ENCODE measurements at regions of chr4 and their contacts with region 1.

Region 1: GRCh38 chr4:123477711-123478209 is 81.2 kb downstream of the SPRY1 start:
- DNase-seq: peak; percentile 74
- ATAC-seq: peak; percentile 84 to 92 (median 92)
- H3K4me3 ChIP-seq: no peak overlapping the region
- H3K4me3 Mint-ChIP-seq: peak overlapping the region; percentile 53
- H3K27ac ChIP-seq: no peak overlapping the region
- H3K27ac Mint-ChIP-seq: peak overlapping the region; percentile 75 to 79
- H3K4me1 ChIP-seq: peaks cover 16% of the 10 kb centered on the region
- H3K4me1 Mint-ChIP-seq: peaks cover 28 to 33% of the 10 kb centered on the region in 2 donors
- H3K27me3 ChIP-seq: no peaks in the 10 kb centered on the region
- H3K27me3 Mint-ChIP-seq: peaks cover 0 to 6% of the 10 kb centered on the region in 2 donors
- CTCF ChIP-seq: no peak

Region 2: DNA sequence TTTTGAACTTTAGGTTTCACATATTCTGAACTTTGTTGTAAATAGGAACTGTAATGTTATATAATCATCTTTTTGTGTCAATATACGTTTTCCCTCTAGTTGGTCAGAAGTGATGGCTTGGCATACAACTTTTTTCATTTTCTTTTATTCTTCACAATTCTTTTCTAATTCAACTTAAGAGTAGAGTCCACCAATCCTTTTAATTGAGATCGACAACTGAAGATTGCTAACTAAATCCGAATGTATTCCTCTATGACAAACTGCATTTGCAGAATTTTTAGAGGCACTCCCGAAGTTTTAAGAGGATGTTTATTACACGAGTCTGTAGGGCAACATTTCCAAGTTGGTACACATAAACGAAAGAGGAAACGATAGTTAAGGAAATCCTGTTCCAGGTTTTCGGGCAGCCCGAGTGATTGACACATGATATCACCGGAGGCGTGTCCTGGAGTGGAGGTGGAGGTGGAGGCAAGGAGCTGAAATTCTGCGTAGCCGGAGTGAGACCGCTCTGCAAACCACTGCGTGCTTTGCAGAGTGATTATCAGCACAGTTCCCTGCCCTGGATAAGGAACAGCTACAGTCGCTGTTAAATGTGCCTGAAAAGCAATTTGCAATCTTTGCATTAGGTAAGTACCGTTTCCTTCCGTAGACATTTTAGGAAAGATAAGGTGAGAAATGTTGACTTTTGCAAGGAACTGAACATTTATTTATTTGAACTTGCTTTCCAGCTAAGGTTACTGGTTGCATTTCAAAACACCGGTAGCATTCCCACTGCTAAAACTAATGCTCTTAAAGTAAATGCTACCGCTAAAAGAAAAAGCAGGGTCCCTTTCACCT is 81.2 kb before region 1 on chr4 and contains the start of gene SPRY1:
- intact Hi-C with region 1: loop called (anchors 2 kb)
- DNase-seq: peak; percentile 50 to 85
- ATAC-seq: peak; percentile 43 to 53 (median 52)
- H3K4me3 ChIP-seq: peak within 1 kb of the TSS; percentile 49
- H3K4me3 Mint-ChIP-seq: peak within 1 kb of the TSS; percentile 92
- H3K27ac ChIP-seq: peak within 1 kb of the TSS; percentile 15
- H3K27ac Mint-ChIP-seq: peak within 1 kb of the TSS; percentile 72 to 76
- H3K4me1 ChIP-seq: peaks cover 25% of the 10 kb centered on the region
- H3K4me1 Mint-ChIP-seq: peaks cover 29 to 36% of the 10 kb centered on the region in 2 donors
- H3K27me3 ChIP-seq: peaks cover 10% of the 10 kb centered on the region
- H3K27me3 Mint-ChIP-seq: peaks cover 11 to 13% of the 10 kb centered on the region in 2 donors
- CTCF ChIP-seq: no peak
- total RNA-seq, gene SPRY1: 8.7 to 9.8 (median 9.5) TPM

Region 3: GRCh38 chr4:123452616-123453015 is 25.1 kb before region 1 on chr4:
- intact Hi-C with region 1: loop called (anchors 1 kb)
- DNase-seq: peak in 1 of 2 donors; percentile 10
- ATAC-seq: no peak
- H3K4me3 ChIP-seq: no peak overlapping the region
- H3K4me3 Mint-ChIP-seq: no peak overlapping the region
- H3K27ac ChIP-seq: no peak overlapping the region
- H3K27ac Mint-ChIP-seq: no peak overlapping the region
- H3K4me1 ChIP-seq: peaks cover 4% of the 10 kb centered on the region
- H3K4me1 Mint-ChIP-seq: peaks cover 13% of the 10 kb centered on the region in 2 donors
- H3K27me3 ChIP-seq: no peaks in the 10 kb centered on the region
- H3K27me3 Mint-ChIP-seq: peaks cover 0 to 4% of the 10 kb centered on the region in 2 donors
- CTCF ChIP-seq: no peak

Region 4: DNA sequence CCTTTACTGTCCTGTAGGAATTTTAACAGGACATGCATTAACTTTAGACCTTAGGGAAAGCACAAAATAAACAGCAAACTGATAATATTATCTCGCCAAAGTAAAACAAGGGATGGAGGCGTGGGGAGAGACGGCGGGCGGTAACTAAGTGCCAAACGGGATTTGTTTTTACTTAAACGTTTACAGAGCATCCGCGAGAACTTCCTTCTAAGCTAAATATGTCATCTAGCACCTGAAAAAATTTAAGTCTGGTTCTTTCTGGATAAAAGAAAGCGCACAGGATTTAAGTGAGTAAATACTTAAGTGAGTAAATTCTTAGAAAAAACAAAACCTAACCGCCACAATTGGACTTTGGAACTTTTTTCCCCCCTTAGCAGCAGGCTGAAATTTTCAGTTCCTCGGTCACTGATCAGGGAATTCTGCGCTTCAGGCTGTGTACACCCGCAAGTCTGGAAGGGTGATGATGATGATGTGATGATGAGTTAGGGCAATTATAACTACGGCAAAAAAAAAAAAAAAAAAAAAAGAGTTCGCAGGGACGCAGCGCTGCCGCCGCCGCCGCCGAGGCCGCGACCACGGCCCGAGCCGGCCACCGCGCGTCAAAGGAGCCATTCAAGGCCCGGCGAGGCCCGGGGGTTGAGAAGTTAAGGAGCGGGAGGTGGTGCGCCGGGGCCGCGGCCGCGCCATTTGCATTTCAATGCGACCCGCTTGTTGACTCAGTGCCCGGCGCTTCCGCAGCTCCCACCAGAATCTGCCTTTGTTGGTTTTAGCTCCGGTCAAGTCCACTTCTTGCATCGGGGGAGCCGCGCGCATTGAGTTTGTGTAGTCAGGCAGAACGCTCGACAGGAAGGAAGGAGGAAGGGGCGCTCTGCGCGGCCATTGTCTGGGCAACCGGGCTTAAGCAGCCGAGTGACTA is 27.6 kb after region 1 on chr4:
- intact Hi-C with region 1: loop called (anchors 2 kb)
- DNase-seq: peak; percentile 8 to 22
- ATAC-seq: peak; percentile 48 to 76 (median 75)
- H3K4me3 ChIP-seq: peak overlapping the region; percentile 36
- H3K4me3 Mint-ChIP-seq: peak overlapping the region; percentile 94
- H3K27ac ChIP-seq: no peak overlapping the region
- H3K27ac Mint-ChIP-seq: peak overlapping the region; percentile 58 to 87
- H3K4me1 ChIP-seq: peaks cover 11% of the 10 kb centered on the region
- H3K4me1 Mint-ChIP-seq: peaks cover 11 to 12% of the 10 kb centered on the region in 2 donors
- H3K27me3 ChIP-seq: no peaks in the 10 kb centered on the region
- H3K27me3 Mint-ChIP-seq: peaks cover 14 to 17% of the 10 kb centered on the region in 2 donors
- CTCF ChIP-seq: no peak

Region 5: GRCh38 chr4:123599920-123600810 is 122.4 kb after region 1 on chr4:
- intact Hi-C with region 1: loop called (anchors 5 kb)
- DNase-seq: peak; percentile 46 to 81
- ATAC-seq: peak; percentile 95 to 99 (median 97)
- H3K4me3 ChIP-seq: no peak overlapping the region
- H3K4me3 Mint-ChIP-seq: peak overlapping the region; percentile 38
- H3K27ac ChIP-seq: peak overlapping the region; percentile 57
- H3K27ac Mint-ChIP-seq: peak overlapping the region; percentile 76 to 91
- H3K4me1 ChIP-seq: peaks cover 11% of the 10 kb centered on the region
- H3K4me1 Mint-ChIP-seq: peaks cover 33 to 34% of the 10 kb centered on the region in 2 donors
- H3K27me3 ChIP-seq: no peaks in the 10 kb centered on the region
- H3K27me3 Mint-ChIP-seq: peaks cover 0 to 2% of the 10 kb centered on the region in 2 donors
- CTCF ChIP-seq: no peak

Region 6: GRCh38 chr4:123806056-123806455 is 328.3 kb after region 1 on chr4:
- intact Hi-C with region 1: no loop called
- DNase-seq: no peak
- ATAC-seq: no peak
- H3K4me3 ChIP-seq: no peak overlapping the region
- H3K4me3 Mint-ChIP-seq: no peak overlapping the region
- H3K27ac ChIP-seq: no peak overlapping the region
- H3K27ac Mint-ChIP-seq: no peak overlapping the region
- H3K4me1 ChIP-seq: no peaks in the 10 kb centered on the region
- H3K4me1 Mint-ChIP-seq: no peaks in the 10 kb centered on the region
- H3K27me3 ChIP-seq: no peaks in the 10 kb centered on the region
- H3K27me3 Mint-ChIP-seq: peaks cover 0 to 6% of the 10 kb centered on the region in 2 donors
- CTCF ChIP-seq: no peak

Region 7: DNA sequence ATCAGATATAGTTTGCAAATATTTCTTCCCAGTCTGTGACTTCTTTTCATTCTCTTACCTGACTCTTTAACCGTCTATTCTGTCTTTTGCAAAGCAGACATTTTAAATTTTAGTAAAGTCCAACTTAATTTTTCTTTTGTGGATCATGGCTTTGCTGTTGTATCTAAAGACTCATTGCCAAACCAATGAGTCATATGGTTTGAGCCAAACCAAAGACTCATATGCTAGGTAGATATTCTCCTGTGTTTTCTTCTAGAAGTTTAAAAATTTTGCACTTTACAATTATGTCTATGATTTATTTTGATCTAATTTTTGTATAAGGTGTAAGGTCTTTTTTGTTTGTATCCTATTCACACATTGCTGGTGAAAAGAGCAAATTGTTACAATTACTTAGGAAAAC is 787.9 kb after region 1 on chr4:
- intact Hi-C with region 1: no loop called
- DNase-seq: no peak
- ATAC-seq: no peak
- H3K4me3 ChIP-seq: no peak overlapping the region
- H3K4me3 Mint-ChIP-seq: no peak overlapping the region
- H3K27ac ChIP-seq: no peak overlapping the region
- H3K27ac Mint-ChIP-seq: no peak overlapping the region
- H3K4me1 ChIP-seq: no peaks in the 10 kb centered on the region
- H3K4me1 Mint-ChIP-seq: no peaks in the 10 kb centered on the region
- H3K27me3 ChIP-seq: no peaks in the 10 kb centered on the region
- H3K27me3 Mint-ChIP-seq: no peaks in the 10 kb centered on the region
- CTCF ChIP-seq: no peak

Measured in natural killer cell (primary cell).